Activated CD4-positive, alpha-beta memory T cell treated with anti-CD3 and anti-CD28 coated beads for 36 hours (primary cell): ENCODE measurements at regions of chr9 and their contacts with region 1.

Region 1: DNA sequence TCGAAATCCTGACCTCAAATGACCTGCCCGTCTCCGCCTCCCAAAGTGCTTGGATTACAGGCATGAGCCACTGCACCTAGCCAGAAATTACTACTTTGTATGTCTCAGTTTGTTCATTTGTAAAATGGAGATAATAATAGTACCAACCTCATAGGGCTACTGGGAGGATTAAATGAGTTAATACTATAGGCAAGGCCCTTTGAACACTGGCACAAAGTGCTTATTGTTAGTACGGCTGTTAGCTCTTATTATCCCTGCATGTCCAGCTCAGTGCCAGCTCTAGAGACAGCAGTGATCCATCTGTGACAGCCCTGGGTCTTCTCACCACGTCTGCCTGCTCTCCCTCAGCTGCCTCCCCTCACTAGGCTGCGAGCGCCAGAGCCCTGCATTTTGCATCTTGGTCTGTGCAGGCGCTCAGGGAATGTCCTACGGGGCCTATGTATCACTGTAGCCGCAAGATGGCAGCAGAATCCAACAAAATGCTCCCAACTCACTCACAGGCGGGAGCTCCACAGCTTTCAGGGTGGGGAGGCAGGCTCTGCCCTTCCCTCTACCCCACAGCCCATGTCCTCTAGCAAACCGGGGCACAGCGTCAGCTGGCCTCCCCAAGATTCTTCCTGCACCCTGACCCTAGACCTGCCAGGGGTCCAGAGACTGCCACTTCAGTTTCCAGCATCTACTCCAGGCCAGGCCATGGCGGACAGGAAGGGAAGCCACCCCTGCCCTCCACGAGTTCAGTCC is 17.7 kb upstream of the AKNA start:
- DNase-seq: peak; percentile 87
- H3K4me3 Mint-ChIP-seq: no peak overlapping the region
- H3K27ac Mint-ChIP-seq: peak overlapping the region; percentile 3
- H3K4me1 Mint-ChIP-seq: peaks cover 4% of the 10 kb centered on the region
- H3K27me3 Mint-ChIP-seq: no peaks in the 10 kb centered on the region

Region 2: DNA sequence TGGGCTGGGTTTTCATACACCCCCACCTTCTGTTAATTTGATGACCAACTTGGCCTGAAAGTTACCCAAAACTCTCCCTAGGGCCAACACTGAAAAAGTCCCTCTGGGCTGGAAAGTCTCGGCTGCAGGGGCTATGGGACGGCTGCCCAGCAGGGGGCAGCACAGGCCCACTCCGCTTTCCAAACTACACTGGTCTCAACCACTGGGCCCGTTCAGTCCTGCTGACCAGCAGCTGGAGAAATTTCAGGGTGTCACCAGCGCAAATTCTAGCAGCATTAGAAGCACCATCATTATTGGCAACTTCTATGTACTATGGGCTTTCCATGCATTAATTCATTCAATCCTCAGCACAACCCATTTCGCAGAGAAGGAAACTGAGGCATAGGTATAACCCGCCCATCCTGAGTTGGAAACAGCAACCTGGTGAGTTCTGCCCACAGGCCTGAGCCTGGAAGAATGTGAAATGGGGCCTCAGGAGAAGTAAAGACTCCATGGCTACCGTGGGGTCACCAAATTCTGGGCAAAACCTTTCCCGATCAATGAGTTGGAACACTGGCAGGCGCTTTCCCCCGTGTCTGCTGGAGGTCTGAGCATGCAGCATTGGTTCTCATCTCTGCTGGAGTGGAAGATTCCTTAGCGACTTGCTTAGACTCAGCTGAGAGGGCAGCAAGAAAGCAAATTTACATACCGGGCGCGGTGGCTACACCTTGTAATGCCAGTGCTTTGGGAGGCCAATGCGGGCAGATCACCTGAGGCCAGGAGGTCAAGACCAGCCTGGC is 66.1 kb before region 1 on chr9:
- CTCF ChIA-PET with region 1: interaction called, 13 read pairs
- POLR2A ChIA-PET with region 1: interaction called, 3 read pairs
- intact Hi-C with region 1: no loop called
- DNase-seq: peak; percentile 71
- H3K4me3 Mint-ChIP-seq: no peak overlapping the region
- H3K27ac Mint-ChIP-seq: peak overlapping the region; percentile 64
- H3K4me1 Mint-ChIP-seq: peaks cover 3% of the 10 kb centered on the region
- H3K27me3 Mint-ChIP-seq: no peaks in the 10 kb centered on the region

Region 3: DNA sequence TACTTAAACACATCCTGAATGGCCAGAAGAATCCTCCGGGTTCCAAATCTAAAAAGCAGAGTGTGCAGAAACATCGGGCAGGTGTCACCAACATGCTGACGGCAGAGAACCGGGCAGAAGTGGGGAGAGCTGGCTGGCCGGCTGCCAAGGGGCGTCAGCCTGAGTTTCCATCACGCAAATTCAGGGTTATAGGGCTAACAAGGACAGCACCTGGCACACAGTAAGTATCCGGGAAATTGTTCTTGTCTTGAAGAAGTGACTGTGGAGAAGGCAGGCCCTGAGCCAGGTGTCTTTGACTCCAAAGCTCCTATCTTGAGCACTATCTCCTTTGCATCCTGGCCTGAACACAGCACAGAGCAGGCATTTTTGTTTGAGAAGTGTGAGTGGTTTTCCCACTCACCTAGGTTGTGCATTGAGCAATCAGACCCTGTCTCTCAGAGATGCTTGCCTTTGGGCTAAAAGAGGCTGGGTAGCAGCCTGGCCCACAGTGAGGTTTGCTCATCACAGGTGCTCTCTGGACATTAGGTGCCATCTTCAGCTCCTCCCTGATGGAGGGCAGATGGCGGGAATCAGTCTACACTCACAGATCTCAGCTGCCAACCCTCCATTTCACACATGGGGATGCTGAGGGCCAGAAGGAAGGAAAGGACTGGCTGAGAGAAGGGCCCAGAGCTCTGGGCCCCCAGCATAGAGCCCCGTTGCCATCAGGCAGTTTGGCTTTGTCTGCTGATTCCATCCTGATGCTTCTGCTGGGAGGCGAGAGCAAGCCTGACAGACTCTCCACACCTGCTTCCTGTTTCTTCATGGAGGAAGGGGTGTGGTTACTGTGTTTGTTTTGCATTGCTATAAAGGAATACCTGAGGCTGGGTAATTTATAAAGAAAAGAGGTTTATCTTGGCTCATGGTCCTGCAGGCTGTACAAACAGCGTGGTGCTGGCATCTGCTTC is 47.0 kb after region 1 on chr9:
- CTCF ChIA-PET with region 1: interaction called, 3 read pairs
- POLR2A ChIA-PET with region 1: no interaction called
- intact Hi-C with region 1: loop called (anchors 5 kb)
- DNase-seq: peak; percentile 59
- H3K4me3 Mint-ChIP-seq: no peak overlapping the region
- H3K27ac Mint-ChIP-seq: peak overlapping the region; percentile 64
- H3K4me1 Mint-ChIP-seq: peaks cover 27% of the 10 kb centered on the region
- H3K27me3 Mint-ChIP-seq: no peaks in the 10 kb centered on the region

Region 4: GRCh38 chr9:114505187-114506081 is 100.0 kb after region 1 on chr9 and contains the start of gene WHRN:
- CTCF ChIA-PET with region 1: interaction called, 47 read pairs
- POLR2A ChIA-PET with region 1: no interaction called
- intact Hi-C with region 1: loop called (anchors 1 kb)
- DNase-seq: peak; percentile 93
- H3K4me3 Mint-ChIP-seq: peak within 1 kb of the TSS; percentile 76
- H3K27ac Mint-ChIP-seq: peak within 1 kb of the TSS; percentile 42
- H3K4me1 Mint-ChIP-seq: peaks cover 24% of the 10 kb centered on the region
- H3K27me3 Mint-ChIP-seq: peaks cover 17% of the 10 kb centered on the region
- total RNA-seq, gene WHRN: 2.8 to 4.4 TPM

Region 5: DNA sequence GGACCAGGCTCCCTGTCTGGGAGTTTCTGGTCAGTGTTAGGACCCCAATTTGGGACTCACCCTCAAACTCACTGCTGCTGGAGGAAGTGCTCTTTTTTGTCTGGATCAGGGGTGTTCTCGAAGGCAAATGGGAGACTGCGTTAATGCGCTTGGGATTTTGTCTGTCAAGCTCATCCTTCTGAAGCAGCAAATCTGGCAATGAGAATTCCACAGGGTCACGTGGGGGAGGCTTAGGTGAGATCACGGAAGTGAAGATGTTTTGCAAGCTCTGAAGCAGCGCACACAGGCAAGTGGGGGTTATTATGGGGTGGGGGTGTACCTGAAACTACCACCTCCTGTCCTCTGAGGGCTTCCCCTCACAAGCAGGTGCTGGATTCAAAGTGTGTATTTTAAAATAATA is 262.7 kb after region 1 on chr9:
- CTCF ChIA-PET with region 1: interaction called, 13 read pairs
- POLR2A ChIA-PET with region 1: no interaction called
- intact Hi-C with region 1: no loop called
- DNase-seq: no peak
- H3K4me3 Mint-ChIP-seq: no peak overlapping the region
- H3K27ac Mint-ChIP-seq: no peak overlapping the region
- H3K4me1 Mint-ChIP-seq: peaks cover 11% of the 10 kb centered on the region
- H3K27me3 Mint-ChIP-seq: peaks cover 2% of the 10 kb centered on the region